ENCODE measurements at regions of chr11 and their contacts with region 1.

Region 1: GRCh38 chr11:24575392-24575791 is 78.5 kb downstream of the LUZP2 start:
- DNase-seq: no peak
- H3K4me3 ChIP-seq: no peak overlapping the region
- H3K27ac ChIP-seq: no peak overlapping the region
- H3K4me1 ChIP-seq: no peaks in the 10 kb centered on the region
- H3K27me3 ChIP-seq: no peaks in the 10 kb centered on the region
- CTCF ChIP-seq: no peak
- POLR2A ChIP-seq: no peak

Region 2: GRCh38 chr11:24286238-24286637 is 289.2 kb before region 1 on chr11:
- intact Hi-C with region 1: loop called (anchors 10 kb)
- DNase-seq: no peak
- H3K4me3 ChIP-seq: no peak overlapping the region
- H3K27ac ChIP-seq: no peak overlapping the region
- H3K4me1 ChIP-seq: no peaks in the 10 kb centered on the region
- H3K27me3 ChIP-seq: no peaks in the 10 kb centered on the region
- CTCF ChIP-seq: no peak
- POLR2A ChIP-seq: no peak

Measured in breast epithelium (tissue), 4 donors.